Activated CD8-positive, alpha-beta T cell treated with anti-CD3 and anti-CD28 coated beads for 36 hours (primary cell): ENCODE measurements at regions of chr2 and their contacts with region 1.

Region 1: DNA sequence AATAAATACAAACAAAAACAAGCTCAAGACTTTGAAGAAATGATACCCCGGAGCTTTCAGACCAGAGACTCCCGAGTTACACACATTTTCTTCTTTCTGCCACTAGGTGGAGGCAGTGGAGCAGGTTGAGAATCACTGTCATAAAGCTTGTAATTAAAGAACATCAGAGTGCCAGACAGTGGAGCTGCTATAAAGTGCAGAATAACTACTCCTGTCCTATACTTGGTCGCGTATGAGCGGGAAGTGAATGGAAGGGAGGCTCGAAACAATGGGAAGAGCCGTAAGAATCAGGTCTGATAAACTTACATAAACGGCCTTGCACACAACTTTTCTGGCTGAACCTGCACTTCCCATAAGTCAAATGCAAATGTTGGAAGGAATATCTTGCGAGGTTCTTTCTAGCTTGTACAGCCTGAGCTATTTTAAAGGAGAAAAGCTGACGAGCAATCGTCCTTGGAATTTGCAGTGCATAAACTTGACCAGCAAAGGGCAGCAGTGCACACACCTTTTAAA is 189.0 kb downstream of the RPIA start:
- DNase-seq: peak; percentile 39
- ATAC-seq: peak; percentile 69
- H3K4me3 Mint-ChIP-seq: no peak overlapping the region
- H3K27ac Mint-ChIP-seq: no peak overlapping the region
- H3K4me1 Mint-ChIP-seq: no peaks in the 10 kb centered on the region
- H3K27me3 Mint-ChIP-seq: peaks cover 9% of the 10 kb centered on the region
- CTCF ChIP-seq: peak; percentile 86

Region 2: DNA sequence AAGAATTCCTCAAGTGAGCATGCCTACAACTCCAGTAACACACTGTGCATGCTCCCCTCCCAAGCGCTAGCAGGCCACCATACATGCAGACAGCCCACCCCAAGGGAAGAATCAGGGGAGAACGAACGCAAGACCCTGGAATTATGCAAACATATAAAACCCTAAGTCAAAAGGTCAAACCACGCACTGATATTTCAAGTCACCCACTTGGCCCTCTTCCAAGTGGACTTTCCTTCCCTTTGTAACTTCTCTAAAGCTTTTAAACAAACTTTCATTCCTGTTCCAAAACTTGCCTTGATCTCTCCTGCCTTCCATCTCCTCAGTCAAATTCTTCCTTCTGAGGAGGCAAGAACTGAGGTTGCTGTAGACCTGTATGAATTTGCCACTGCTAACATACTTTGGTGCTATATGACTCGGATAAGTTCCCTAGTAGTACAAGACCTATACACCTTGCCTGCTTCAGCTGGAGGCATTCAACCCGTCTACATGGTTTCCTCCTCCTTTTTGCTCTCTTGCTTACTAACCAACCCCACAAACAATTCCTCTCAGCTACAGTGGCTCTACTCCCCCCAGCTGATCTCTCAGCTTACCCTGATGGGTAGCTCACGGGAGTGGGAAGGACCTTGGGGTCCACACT is 200.1 kb before region 1 on chr2:
- CTCF ChIA-PET with region 1: no interaction called
- POLR2A ChIA-PET with region 1: no interaction called
- intact Hi-C with region 1: no loop called
- DNase-seq: no peak
- ATAC-seq: no peak
- H3K4me3 Mint-ChIP-seq: no peak overlapping the region
- H3K27ac Mint-ChIP-seq: no peak overlapping the region
- H3K4me1 Mint-ChIP-seq: no peaks in the 10 kb centered on the region
- H3K27me3 Mint-ChIP-seq: peaks cover 2% of the 10 kb centered on the region
- CTCF ChIP-seq: no peak

Region 3: GRCh38 chr2:88739985-88740600 is 140.4 kb before region 1 on chr2:
- CTCF ChIA-PET with region 1: interaction called, 15 read pairs
- POLR2A ChIA-PET with region 1: no interaction called
- intact Hi-C with region 1: no loop called
- DNase-seq: peak; percentile 81
- ATAC-seq: peak; percentile 93
- H3K4me3 Mint-ChIP-seq: no peak overlapping the region
- H3K27ac Mint-ChIP-seq: no peak overlapping the region
- H3K4me1 Mint-ChIP-seq: peaks cover 25% of the 10 kb centered on the region
- H3K27me3 Mint-ChIP-seq: no peaks in the 10 kb centered on the region
- CTCF ChIP-seq: peak; percentile 94

Region 4: DNA sequence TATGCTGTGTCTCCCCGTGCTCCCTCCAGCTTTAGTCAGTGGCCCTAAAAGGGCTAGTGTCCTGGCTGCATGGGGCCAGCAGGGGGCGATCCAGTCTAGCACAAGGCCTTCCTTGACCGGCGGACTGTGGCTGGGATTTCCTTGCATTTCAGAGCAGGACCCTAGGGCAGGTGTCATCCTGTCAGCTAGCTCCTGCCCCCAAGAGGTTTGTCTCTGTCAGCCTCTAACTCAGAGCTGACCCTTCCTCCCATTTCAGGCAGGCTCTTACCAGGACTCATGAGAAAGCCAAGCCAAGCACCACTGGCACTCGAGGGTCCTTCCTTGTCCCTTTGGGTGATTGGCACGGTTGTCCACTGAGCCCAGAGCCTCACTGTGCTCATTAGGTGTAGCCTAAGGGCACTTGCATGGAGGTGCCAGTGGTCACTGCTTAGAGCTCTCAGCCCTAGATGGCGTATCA is 48.7 kb before region 1 on chr2:
- CTCF ChIA-PET with region 1: interaction called, 22 read pairs
- POLR2A ChIA-PET with region 1: no interaction called
- intact Hi-C with region 1: no loop called
- DNase-seq: peak; percentile 76
- ATAC-seq: peak; percentile 74
- H3K4me3 Mint-ChIP-seq: no peak overlapping the region
- H3K27ac Mint-ChIP-seq: no peak overlapping the region
- H3K4me1 Mint-ChIP-seq: no peaks in the 10 kb centered on the region
- H3K27me3 Mint-ChIP-seq: peaks cover 8% of the 10 kb centered on the region
- CTCF ChIP-seq: peak; percentile 74

Region 5: GRCh38 chr2:88857951-88858411 is 22.5 kb before region 1 on chr2:
- CTCF ChIA-PET with region 1: interaction called, 30 read pairs
- POLR2A ChIA-PET with region 1: interaction called, 3 read pairs
- intact Hi-C with region 1: no loop called
- DNase-seq: no peak
- ATAC-seq: no peak
- H3K4me3 Mint-ChIP-seq: no peak overlapping the region
- H3K27ac Mint-ChIP-seq: no peak overlapping the region
- H3K4me1 Mint-ChIP-seq: no peaks in the 10 kb centered on the region
- H3K27me3 Mint-ChIP-seq: peaks cover 8% of the 10 kb centered on the region
- CTCF ChIP-seq: no peak

Region 6: GRCh38 chr2:88897715-88898114 is 17.2 kb after region 1 on chr2:
- CTCF ChIA-PET with region 1: interaction called, 41 read pairs
- POLR2A ChIA-PET with region 1: no interaction called
- intact Hi-C with region 1: no loop called
- DNase-seq: no peak
- ATAC-seq: no peak
- H3K4me3 Mint-ChIP-seq: no peak overlapping the region
- H3K27ac Mint-ChIP-seq: no peak overlapping the region
- H3K4me1 Mint-ChIP-seq: no peaks in the 10 kb centered on the region
- H3K27me3 Mint-ChIP-seq: peaks cover 8% of the 10 kb centered on the region
- CTCF ChIP-seq: no peak

Region 7: DNA sequence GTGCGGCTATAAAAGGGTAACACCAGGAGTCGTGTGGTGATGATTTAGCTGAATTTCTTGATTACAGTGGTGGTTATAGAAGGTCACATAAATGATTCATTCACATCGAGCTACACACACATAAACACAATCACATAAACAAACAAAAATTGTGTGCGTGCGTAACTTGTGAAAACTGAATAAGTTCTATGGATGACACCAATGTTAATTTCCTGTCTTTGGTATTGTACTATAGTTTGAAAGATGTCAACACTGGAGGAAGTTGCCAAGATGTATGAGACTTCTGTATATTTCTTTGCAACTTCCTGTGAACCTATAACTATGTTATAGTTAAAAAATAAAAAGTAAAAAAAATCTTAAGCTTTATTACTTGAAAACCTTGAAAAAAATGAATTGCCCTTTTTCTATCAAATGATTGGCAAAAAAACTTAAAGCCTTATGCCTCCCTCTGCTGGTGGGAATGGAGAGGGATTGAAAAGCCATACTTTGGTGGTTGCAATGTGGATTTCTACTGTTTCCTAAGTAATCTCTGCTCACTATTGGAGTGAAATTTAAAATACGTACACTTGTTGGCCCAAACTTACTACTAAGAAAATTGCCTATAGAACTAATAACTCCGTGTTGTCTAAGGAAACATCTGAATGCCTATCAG is 38.7 kb after region 1 on chr2:
- CTCF ChIA-PET with region 1: interaction called, 10 read pairs
- POLR2A ChIA-PET with region 1: no interaction called
- intact Hi-C with region 1: no loop called
- DNase-seq: peak; percentile 13
- ATAC-seq: no peak
- H3K4me3 Mint-ChIP-seq: no peak overlapping the region
- H3K27ac Mint-ChIP-seq: no peak overlapping the region
- H3K4me1 Mint-ChIP-seq: no peaks in the 10 kb centered on the region
- H3K27me3 Mint-ChIP-seq: peaks cover 5% of the 10 kb centered on the region
- CTCF ChIP-seq: peak; percentile 41